ENCODE measurements at regions of chr4 and their contacts with region 1.

Region 1: GRCh38 chr4:158182736-158183135 is 9.9 kb upstream of the GASK1B start:
- DNase-seq: no peak
- ATAC-seq: peak in 3 of 4 donors; percentile 22 to 57 (median 52)
- H3K4me3 ChIP-seq: no peak overlapping the region
- H3K27ac ChIP-seq: no peak overlapping the region
- H3K4me1 ChIP-seq: peaks cover 0 to 21% (median 6%) of the 10 kb centered on the region in 12 donors
- H3K27me3 ChIP-seq: no peaks in the 10 kb centered on the region
- CTCF ChIP-seq: no peak
- POLR2A ChIP-seq: no peak

Region 2: GRCh38 chr4:158229768-158230167 is 47.0 kb after region 1 on chr4:
- intact Hi-C with region 1: no loop called
- DNase-seq: no peak
- ATAC-seq: no peak
- H3K4me3 ChIP-seq: no peak overlapping the region
- H3K27ac ChIP-seq: no peak overlapping the region
- H3K4me1 ChIP-seq: peaks cover 0 to 6% (median 0%) of the 10 kb centered on the region in 12 donors
- H3K27me3 ChIP-seq: no peaks in the 10 kb centered on the region
- CTCF ChIP-seq: no peak
- POLR2A ChIP-seq: no peak

Region 3: GRCh38 chr4:158243071-158243470 is 60.3 kb after region 1 on chr4:
- intact Hi-C with region 1: loop called in 1 of 10 experiments (anchors 5 kb)
- DNase-seq: no peak
- ATAC-seq: no peak
- H3K4me3 ChIP-seq: no peak overlapping the region
- H3K27ac ChIP-seq: no peak overlapping the region
- H3K4me1 ChIP-seq: no peaks in the 10 kb centered on the region
- H3K27me3 ChIP-seq: no peaks in the 10 kb centered on the region
- CTCF ChIP-seq: no peak
- POLR2A ChIP-seq: no peak

Region 4: DNA sequence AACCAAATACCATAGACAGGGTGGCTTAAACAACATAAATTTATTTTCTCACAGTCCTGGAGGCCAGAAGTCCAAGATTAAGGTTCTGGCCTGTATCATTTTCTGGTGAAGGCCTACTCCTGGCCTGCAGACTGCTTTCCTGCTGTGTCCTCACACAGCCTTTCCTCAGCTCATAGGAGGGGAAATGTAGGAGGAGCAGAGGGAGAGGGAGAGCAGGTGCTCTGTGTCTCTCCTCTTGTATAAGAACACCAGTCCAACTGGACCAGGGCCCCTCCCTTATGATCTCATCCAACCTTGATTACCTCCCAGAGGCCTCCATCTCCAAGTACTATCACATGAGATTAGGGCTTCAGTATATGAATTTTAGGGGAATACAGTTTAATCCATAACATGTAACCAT is 954.4 kb after region 1 on chr4:
- intact Hi-C with region 1: no loop called
- DNase-seq: no peak
- ATAC-seq: peak in 3 of 4 donors; percentile 71 to 73 (median 71)
- H3K4me3 ChIP-seq: no peak overlapping the region
- H3K27ac ChIP-seq: no peak overlapping the region
- H3K4me1 ChIP-seq: peaks cover 0 to 67% (median 55%) of the 10 kb centered on the region in 12 donors
- H3K27me3 ChIP-seq: no peaks in the 10 kb centered on the region
- CTCF ChIP-seq: no peak
- POLR2A ChIP-seq: no peak